ENCODE measurements at regions of chr3 and their contacts with region 1.

Region 1: GRCh38 chr3:171049861-171050444 is 23.4 kb upstream of the SLC2A2 start:
- DNase-seq: peak; percentile 70
- ATAC-seq: peak; percentile 80
- H3K4me3 Mint-ChIP-seq: no peak overlapping the region
- H3K27ac Mint-ChIP-seq: no peak overlapping the region
- H3K4me1 Mint-ChIP-seq: no peaks in the 10 kb centered on the region
- H3K27me3 Mint-ChIP-seq: peaks cover 5% of the 10 kb centered on the region

Region 2: GRCh38 chr3:170792471-170792870 is 257.5 kb before region 1 on chr3:
- CTCF ChIA-PET with region 1: no interaction called
- POLR2A ChIA-PET with region 1: no interaction called
- intact Hi-C with region 1: no loop called
- DNase-seq: no peak
- ATAC-seq: no peak
- H3K4me3 Mint-ChIP-seq: no peak overlapping the region
- H3K27ac Mint-ChIP-seq: no peak overlapping the region
- H3K4me1 Mint-ChIP-seq: no peaks in the 10 kb centered on the region
- H3K27me3 Mint-ChIP-seq: peaks cover 4% of the 10 kb centered on the region

Region 3: DNA sequence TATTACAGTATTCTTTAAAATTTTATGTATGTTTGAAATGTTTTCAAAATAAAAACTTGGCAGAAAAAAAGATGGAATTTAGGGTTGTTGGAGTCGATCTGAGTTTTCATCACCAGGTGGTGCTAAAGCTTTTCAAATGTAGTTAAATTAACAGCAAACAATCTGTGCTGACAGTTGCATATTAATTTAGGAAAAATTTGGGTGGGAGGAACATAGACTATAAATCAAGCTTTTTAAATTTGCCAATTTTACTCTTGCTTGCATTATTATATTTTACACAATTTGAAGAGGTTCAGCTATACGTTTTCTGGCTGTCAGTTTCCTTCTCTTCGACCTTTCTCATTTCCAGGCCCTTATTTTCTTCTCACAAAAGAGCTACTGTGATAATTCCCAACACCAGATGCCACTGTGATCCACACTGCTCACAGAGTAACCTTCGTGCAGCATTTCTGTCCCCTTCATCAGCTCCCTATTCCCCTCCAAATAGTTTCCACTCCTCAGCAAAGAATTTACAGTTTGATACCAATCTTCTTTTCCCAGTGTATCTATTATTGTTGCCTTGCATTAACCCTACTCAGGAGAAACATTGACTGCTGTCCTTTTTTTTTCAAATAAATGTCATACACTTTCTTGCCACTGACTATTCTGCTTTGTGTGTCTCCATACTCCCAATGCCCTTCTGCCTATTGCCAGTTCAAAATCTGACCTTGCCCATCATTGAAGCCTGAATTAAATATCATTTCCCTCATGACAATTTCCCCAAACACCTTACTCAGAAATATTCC is 88.1 kb before region 1 on chr3:
- CTCF ChIA-PET with region 1: interaction called, 4 read pairs
- POLR2A ChIA-PET with region 1: no interaction called
- intact Hi-C with region 1: loop called in 1 of 2 experiments (anchors 5 kb)
- DNase-seq: peak; percentile 7
- ATAC-seq: no peak
- H3K4me3 Mint-ChIP-seq: no peak overlapping the region
- H3K27ac Mint-ChIP-seq: no peak overlapping the region
- H3K4me1 Mint-ChIP-seq: no peaks in the 10 kb centered on the region
- H3K27me3 Mint-ChIP-seq: peaks cover 2% of the 10 kb centered on the region

Region 4: GRCh38 chr3:172106989-172107388 is 1057.0 kb after region 1 on chr3:
- CTCF ChIA-PET with region 1: no interaction called
- POLR2A ChIA-PET with region 1: no interaction called
- intact Hi-C with region 1: no loop called
- DNase-seq: peak; percentile 73
- ATAC-seq: peak; percentile 57
- H3K4me3 Mint-ChIP-seq: peak overlapping the region; percentile 54
- H3K27ac Mint-ChIP-seq: peak overlapping the region; percentile 82
- H3K4me1 Mint-ChIP-seq: peaks cover 73% of the 10 kb centered on the region
- H3K27me3 Mint-ChIP-seq: no peaks in the 10 kb centered on the region

Measured in activated CD4-positive, alpha-beta T cell treated with anti-CD3 and anti-CD28 coated beads for 36 hours (primary cell).